IMR-90 (cell line): ENCODE measurements at regions of chr15 and their contacts with region 1.

Region 1: GRCh38 chr15:60592371-60593169 is 113.6 kb upstream of the ICE2 start:
- DNase-seq: peak; percentile 68
- ATAC-seq: peak; percentile 86
- H3K4me3 ChIP-seq: peak overlapping the region; percentile 94
- H3K27ac ChIP-seq: peak overlapping the region; percentile 80; the same call in 1 of the 2 replicates
- H3K4me1 ChIP-seq: peaks cover 5% of the 10 kb centered on the region; the same call in 1 of the 2 replicates
- H3K27me3 ChIP-seq: peaks cover 17% of the 10 kb centered on the region
- CTCF ChIP-seq: peak; percentile 22; the same call in 1 of the 2 replicates
- POLR2A ChIP-seq: peak; percentile 82
- RAD21 ChIP-seq: no peak

Region 2: GRCh38 chr15:60204131-60204885 is 388.3 kb before region 1 on chr15:
- CTCF ChIA-PET with region 1: no interaction called
- POLR2A ChIA-PET with region 1: no interaction called
- dilution Hi-C with region 1: no loop called
- in situ Hi-C with region 1: no loop called
- intact Hi-C with region 1: no loop called
- DNase-seq: no peak
- ATAC-seq: no peak
- H3K4me3 ChIP-seq: no peak overlapping the region
- H3K27ac ChIP-seq: no peak overlapping the region
- H3K4me1 ChIP-seq: no peaks in the 10 kb centered on the region
- H3K27me3 ChIP-seq: peaks cover 7% of the 10 kb centered on the region; the same call in 1 of the 2 replicates
- CTCF ChIP-seq: no peak
- POLR2A ChIP-seq: no peak
- RAD21 ChIP-seq: no peak

Region 3: DNA sequence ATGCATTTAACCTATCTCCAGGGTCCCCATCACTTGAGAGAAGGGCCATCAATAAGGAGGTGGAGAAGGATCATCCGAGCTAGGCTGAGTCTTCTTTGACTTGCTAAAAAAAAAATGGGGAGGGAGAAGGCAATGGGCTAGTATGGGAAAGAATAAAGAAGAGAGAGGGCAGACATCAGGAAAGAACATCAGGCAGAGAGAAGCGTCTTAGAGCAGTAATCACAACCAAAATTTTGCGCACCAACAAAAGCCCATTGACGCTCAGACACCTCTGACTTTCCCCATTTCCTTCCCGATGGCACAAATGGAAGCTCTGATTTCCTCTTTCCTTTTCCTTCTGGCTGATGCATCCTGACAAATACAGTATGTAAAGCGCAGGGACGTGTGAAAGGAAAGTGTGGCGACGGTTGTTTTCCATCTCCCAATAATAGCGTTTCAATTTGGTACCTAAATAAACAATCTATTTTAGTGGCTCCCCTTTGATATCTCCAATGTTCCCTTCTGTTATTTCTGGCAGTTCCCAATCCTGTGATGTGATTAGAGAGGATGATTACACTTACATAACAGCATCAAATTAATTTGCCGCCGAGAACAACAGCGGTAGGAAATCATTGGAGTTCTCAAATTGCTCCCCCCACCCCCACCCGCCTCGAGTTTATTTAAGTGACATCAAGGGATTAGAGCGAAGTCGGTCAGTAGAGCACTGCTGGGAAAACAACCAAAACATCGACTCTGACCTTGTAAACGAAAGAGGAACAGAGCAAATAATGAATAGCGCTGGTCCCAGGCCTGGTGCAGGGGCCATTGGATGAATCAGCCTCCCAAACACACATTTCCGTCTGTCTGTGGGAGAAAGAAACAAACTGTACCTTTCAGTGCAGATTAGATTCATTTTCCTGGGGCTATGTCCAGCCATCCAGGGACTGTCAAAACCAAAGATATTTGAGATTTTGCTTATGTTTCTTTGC is 159.7 kb after region 1 on chr15:
- CTCF ChIA-PET with region 1: interaction called, 3 read pairs
- POLR2A ChIA-PET with region 1: no interaction called
- dilution Hi-C with region 1: no loop called
- in situ Hi-C with region 1: no loop called
- intact Hi-C with region 1: loop called (anchors 10 kb)
- DNase-seq: peak; percentile 85
- ATAC-seq: peak; percentile 98
- H3K4me3 ChIP-seq: no peak overlapping the region; the same call in 1 of the 2 replicates
- H3K27ac ChIP-seq: no peak overlapping the region
- H3K4me1 ChIP-seq: peaks cover 10% of the 10 kb centered on the region
- H3K27me3 ChIP-seq: peaks cover 2% of the 10 kb centered on the region; the same call in 1 of the 2 replicates
- CTCF ChIP-seq: no peak
- POLR2A ChIP-seq: no peak
- RAD21 ChIP-seq: 0 out of 2 replicates have a peak, but pooled peaks have one; percentile 6

Region 4: GRCh38 chr15:60829416-60829815 is 236.8 kb after region 1 on chr15:
- CTCF ChIA-PET with region 1: no interaction called
- POLR2A ChIA-PET with region 1: no interaction called
- dilution Hi-C with region 1: no loop called
- in situ Hi-C with region 1: no loop called
- intact Hi-C with region 1: loop called (anchors 10 kb)
- DNase-seq: no peak
- ATAC-seq: no peak
- H3K4me3 ChIP-seq: no peak overlapping the region
- H3K27ac ChIP-seq: no peak overlapping the region
- H3K4me1 ChIP-seq: no peaks in the 10 kb centered on the region
- H3K27me3 ChIP-seq: peaks cover 15% of the 10 kb centered on the region
- CTCF ChIP-seq: no peak
- POLR2A ChIP-seq: no peak
- RAD21 ChIP-seq: no peak

Region 5: GRCh38 chr15:61227950-61228936 is 635.7 kb after region 1 on chr15:
- CTCF ChIA-PET with region 1: no interaction called
- POLR2A ChIA-PET with region 1: no interaction called
- dilution Hi-C with region 1: no loop called
- in situ Hi-C with region 1: no loop called
- intact Hi-C with region 1: loop called (anchors 2 kb)
- DNase-seq: peak; percentile 33
- ATAC-seq: peak; percentile 35
- H3K4me3 ChIP-seq: peak overlapping the region; percentile 88
- H3K27ac ChIP-seq: no peak overlapping the region
- H3K4me1 ChIP-seq: no peaks in the 10 kb centered on the region
- H3K27me3 ChIP-seq: peaks cover 24% of the 10 kb centered on the region
- CTCF ChIP-seq: no peak
- POLR2A ChIP-seq: no peak
- RAD21 ChIP-seq: no peak